Left ventricle myocardium superior (tissue), 1 donor: ENCODE measurements at regions of chr3 and their contacts with region 1.

Region 1: GRCh38 chr3:190701096-190701532 is 161.4 kb downstream of the GMNC start:
- DNase-seq: peak; percentile 29
- ATAC-seq: peak; percentile 88

Region 2: DNA sequence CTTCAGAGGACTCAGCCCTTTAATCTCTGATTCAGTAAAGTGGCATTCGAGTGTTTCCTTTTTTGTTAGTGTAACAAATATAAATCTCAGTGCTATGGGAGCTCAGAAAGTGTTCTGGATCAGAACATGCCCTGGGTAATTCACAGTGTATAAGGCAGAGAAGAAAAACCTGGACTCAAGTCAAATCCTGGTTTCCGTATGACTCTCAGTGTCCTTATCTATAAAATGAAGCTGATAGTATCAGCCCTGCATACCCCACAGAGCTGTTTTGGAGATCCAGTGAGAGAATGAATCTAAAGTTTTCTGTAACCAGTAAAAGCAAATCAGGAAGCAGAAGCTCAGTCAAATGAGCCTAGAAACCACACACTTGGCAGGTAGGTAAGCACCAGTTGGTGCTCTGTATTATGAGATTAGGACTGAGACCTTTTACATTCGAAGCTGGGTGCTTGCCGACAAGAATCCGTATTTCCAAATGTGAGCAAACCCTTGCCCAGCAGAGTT is 120.0 kb before region 1 on chr3:
- intact Hi-C with region 1: no loop called
- DNase-seq: no peak
- ATAC-seq: peak; percentile 89

Region 3: GRCh38 chr3:190811775-190812480 is 110.8 kb after region 1 on chr3:
- intact Hi-C with region 1: loop called (anchors 10 kb)
- DNase-seq: no peak
- ATAC-seq: peak; percentile 10

Region 4: GRCh38 chr3:190826018-190826417 is 124.9 kb after region 1 on chr3:
- intact Hi-C with region 1: no loop called
- DNase-seq: no peak
- ATAC-seq: no peak